Panc1 (cell line): ENCODE measurements at regions of chr15 and their contacts with region 1.

Region 1: GRCh38 chr15:101617390-101617965 is 34.7 kb downstream of the TM2D3 start:
- DNase-seq: no peak
- ATAC-seq: no peak
- H3K4me3 ChIP-seq: no peak overlapping the region
- H3K27ac ChIP-seq: no peak overlapping the region
- H3K4me1 ChIP-seq: peaks cover 10% of the 10 kb centered on the region
- H3K27me3 ChIP-seq: no peaks in the 10 kb centered on the region
- CTCF ChIP-seq: no peak

Region 2: GRCh38 chr15:101568309-101568708 is 49.2 kb before region 1 on chr15:
- CTCF ChIA-PET with region 1: no interaction called
- POLR2A ChIA-PET with region 1: no interaction called
- in situ Hi-C with region 1: no loop called
- intact Hi-C with region 1: loop called (anchors 1 kb)
- DNase-seq: no peak
- ATAC-seq: no peak
- H3K4me3 ChIP-seq: no peak overlapping the region
- H3K27ac ChIP-seq: no peak overlapping the region
- H3K4me1 ChIP-seq: no peaks in the 10 kb centered on the region
- H3K27me3 ChIP-seq: no peaks in the 10 kb centered on the region; the same call in 1 of the 2 replicates
- CTCF ChIP-seq: no peak

Region 3: DNA sequence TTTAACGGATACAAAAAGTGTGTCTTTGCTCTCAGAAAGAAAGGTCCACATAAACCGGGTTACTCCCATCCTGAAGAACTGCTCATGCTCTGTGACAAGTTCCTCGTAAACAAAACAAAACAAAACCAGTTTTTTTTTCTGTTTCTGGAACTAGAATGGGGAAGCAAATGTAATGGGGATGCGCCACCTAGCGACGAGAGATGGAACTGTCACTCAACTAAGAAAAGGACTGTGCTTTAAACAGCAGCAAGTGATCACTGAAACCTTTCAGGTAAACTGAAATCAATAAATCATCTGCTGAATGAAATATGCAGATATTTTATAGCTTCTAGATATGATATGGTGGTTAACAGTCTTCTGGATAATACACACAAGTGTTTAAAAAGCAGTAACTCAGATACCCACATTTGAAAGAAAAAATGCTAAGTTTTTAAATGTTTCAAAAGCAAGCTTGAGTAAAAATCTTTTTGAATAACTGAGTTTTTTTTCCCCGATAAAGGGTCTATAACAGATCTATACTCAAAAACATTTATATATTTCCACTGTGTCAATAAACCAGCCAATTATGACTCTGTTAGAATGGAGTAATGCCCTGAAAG is 23.8 kb after region 1 on chr15:
- CTCF ChIA-PET with region 1: no interaction called
- POLR2A ChIA-PET with region 1: no interaction called
- in situ Hi-C with region 1: no loop called
- intact Hi-C with region 1: no loop called
- DNase-seq: peak; percentile 61
- ATAC-seq: peak; percentile 67
- H3K4me3 ChIP-seq: no peak overlapping the region
- H3K27ac ChIP-seq: no peak overlapping the region
- H3K4me1 ChIP-seq: no peaks in the 10 kb centered on the region; the same call in 1 of the 2 replicates
- H3K27me3 ChIP-seq: no peaks in the 10 kb centered on the region
- CTCF ChIP-seq: peak; percentile 92